ENCODE measurements at regions of chr7 and their contacts with region 1.

Region 1: DNA sequence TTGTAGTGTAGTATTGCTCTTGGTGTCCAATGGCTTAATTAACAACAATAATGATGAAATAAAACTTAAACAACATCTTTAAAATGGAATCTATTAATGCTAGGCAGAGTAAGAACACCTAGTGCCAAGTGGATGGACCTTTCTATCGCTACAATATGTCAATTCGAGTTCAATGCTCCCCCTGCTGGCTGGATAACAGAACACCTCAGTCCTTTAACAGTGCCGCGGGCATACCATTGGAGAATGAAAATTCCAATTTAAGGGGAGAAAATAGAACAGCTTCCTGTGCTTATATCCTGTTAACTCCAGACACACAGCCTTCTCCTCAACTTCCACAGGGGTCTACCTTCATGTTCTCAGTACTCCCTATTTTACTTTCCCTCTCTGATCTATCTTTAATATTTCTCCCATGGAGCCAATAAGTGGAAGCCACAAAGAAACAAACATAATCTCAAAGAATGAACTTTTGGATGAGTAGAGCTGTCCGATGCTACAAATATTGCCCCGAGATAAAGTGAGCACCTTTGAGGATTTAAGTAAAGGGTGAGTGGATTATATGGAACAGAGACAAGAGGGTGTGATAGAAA is 41.4 kb downstream of the COL1A2 start:
- DNase-seq: peak; percentile 82
- ATAC-seq: peak; percentile 99
- H3K4me3 ChIP-seq: no peak overlapping the region; the same call in 1 of the 2 replicates
- H3K27ac ChIP-seq: no peak overlapping the region
- H3K4me1 ChIP-seq: no peaks in the 10 kb centered on the region
- H3K27me3 ChIP-seq: no peaks in the 10 kb centered on the region
- CTCF ChIP-seq: peak; percentile 89

Region 2: DNA sequence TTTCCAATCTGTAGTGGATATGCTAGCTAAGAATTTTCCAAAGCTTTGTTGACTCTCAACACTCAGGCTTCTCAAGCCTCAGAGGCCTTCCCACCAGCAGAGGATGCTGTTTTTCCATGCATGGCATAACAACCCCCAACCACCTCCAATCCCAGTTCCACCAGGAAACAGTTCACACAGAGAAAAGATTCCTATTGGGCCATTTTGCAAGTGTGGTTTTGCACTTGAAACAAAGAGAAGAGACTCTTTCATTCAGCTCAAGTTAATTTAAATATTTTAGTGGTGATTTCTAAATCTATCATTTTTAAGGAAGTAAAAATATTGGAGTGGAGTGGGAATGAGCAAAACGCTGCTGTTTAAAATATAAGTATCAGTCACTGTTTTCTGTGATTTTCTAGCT is 147.0 kb before region 1 on chr7:
- CTCF ChIA-PET with region 1: interaction called, 8 read pairs
- POLR2A ChIA-PET with region 1: no interaction called
- intact Hi-C with region 1: loop called (anchors 1 kb)
- DNase-seq: peak; percentile 85
- ATAC-seq: peak; percentile 100
- H3K4me3 ChIP-seq: no peak overlapping the region
- H3K27ac ChIP-seq: no peak overlapping the region
- H3K4me1 ChIP-seq: no peaks in the 10 kb centered on the region
- H3K27me3 ChIP-seq: peaks cover 13% of the 10 kb centered on the region
- CTCF ChIP-seq: peak; percentile 96

Region 3: DNA sequence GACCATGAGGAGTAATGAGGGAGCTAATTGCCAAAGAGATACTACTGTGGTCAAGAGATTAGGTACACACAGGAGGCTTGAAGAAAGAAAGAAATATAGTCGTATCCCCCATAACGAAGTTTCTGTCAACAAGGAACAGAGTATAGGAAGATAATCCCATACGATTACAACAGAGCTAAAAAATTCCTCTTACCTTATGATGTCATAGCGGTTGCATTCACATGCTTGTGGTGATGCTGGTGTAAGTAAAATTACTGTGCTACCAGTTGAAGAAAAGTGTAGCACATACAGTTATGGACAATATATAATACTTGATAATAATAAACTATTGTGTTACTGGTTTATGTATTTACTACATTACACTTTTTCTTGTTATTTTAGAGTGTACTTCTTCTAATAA is 21.9 kb after region 1 on chr7:
- CTCF ChIA-PET with region 1: no interaction called
- POLR2A ChIA-PET with region 1: no interaction called
- intact Hi-C with region 1: no loop called
- DNase-seq: no peak
- ATAC-seq: no peak
- H3K4me3 ChIP-seq: no peak overlapping the region
- H3K27ac ChIP-seq: no peak overlapping the region
- H3K4me1 ChIP-seq: no peaks in the 10 kb centered on the region
- H3K27me3 ChIP-seq: no peaks in the 10 kb centered on the region
- CTCF ChIP-seq: no peak